Mammary epithelial cell (primary cell): ENCODE measurements at regions of chr7 and their contacts with region 1.

Region 1: GRCh38 chr7:118169146-118169545 is 14.8 kb upstream of the LSM8 start:
- DNase-seq: peak; percentile 12
- H3K4me3 ChIP-seq: no peak overlapping the region
- H3K27ac ChIP-seq: no peak overlapping the region
- H3K4me1 ChIP-seq: no peaks in the 10 kb centered on the region
- H3K27me3 ChIP-seq: peaks cover 3% of the 10 kb centered on the region
- CTCF ChIP-seq: peak in 1 of 2 donors; percentile 23

Region 2: GRCh38 chr7:118195837-118196474 is 26.8 kb after region 1 on chr7:
- CTCF ChIA-PET with region 1: interaction called, 5 read pairs
- dilution Hi-C with region 1: no loop called
- in situ Hi-C with region 1: no loop called
- intact Hi-C with region 1: loop called (anchors 1 kb)
- DNase-seq: peak; percentile 30
- H3K4me3 ChIP-seq: no peak overlapping the region
- H3K27ac ChIP-seq: no peak overlapping the region
- H3K4me1 ChIP-seq: no peaks in the 10 kb centered on the region
- H3K27me3 ChIP-seq: no peaks in the 10 kb centered on the region
- CTCF ChIP-seq: peak; percentile 75